Posterior vena cava (tissue), 2 donors: ENCODE measurements at regions of chr7 and their contacts with region 1.

Region 1: DNA sequence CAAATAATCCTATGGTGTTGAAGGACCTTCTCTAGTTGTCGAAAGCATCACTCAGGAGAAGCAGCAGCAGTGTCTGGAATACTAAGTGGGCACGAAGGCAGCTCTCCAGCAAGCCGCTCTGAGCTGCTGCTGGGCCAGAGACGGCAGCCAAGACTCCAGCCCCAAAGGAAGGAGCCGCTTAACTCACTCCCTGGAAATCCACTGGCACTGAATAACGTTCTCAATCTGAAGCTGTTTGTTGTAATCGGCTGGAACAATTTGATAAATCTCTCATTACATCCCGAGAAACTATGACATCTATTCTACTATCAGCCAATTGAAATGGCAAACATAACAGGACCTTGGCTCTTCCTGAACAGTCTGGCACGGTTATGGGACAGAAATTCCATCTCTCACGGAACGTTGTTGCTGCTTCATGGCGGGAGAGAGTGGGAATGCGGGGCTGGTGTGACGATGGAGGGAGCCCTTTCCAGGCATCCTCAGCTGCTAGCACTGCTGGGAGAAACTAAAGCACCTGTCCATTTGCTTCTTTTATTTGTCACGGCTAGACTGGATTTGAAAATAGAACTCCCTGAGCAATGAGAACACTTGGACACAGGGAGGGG is 331.5 kb upstream of the RNF32 start:
- DNase-seq: no peak

Region 2: DNA sequence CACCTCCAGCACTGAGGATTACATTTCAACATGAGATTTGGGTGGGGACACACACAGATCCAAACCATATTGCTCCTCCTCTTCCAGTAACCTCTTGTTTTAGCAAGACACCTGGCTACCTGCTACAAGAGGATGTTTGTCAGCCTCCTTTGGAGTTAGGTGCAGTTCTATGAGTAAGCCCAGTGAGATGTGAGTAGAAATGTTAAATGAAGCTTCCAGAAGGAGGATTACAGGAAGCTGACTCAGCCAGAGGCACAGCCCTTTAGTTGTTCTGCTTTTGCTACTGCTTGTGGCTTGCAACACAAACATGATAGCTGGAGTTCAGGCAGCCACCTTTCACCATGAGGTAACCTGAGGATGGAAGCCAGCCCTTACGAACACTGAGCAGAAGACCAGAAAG is 51.2 kb before region 1 on chr7:
- intact Hi-C with region 1: loop called in 1 of 2 experiments (anchors 2 kb)
- DNase-seq: no peak

Region 3: DNA sequence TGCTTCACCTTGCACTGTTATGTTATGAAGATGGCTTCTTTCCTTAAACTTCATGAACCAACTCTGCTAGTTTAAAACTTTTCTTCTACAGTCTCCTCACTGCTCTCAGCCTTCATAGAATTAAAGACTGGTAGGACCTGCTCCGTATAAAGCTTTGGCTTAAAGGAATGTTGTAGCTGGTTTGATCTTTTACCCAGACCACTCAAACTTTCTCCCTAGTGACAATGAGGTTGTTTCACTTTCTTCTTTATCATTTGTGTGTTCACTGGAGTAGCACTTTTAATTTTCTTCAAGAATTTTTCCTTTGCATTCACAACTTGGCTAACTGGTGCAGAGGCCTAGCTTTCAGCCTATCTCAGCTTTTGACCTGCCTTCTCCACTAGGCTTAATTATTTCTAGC is 15.1 kb after region 1 on chr7:
- intact Hi-C with region 1: no loop called
- DNase-seq: no peak

Region 4: GRCh38 chr7:157897681-157898080 is 1588.6 kb after region 1 on chr7:
- intact Hi-C with region 1: loop called in 1 of 2 experiments (anchors 5 kb)
- DNase-seq: no peak

Region 5: DNA sequence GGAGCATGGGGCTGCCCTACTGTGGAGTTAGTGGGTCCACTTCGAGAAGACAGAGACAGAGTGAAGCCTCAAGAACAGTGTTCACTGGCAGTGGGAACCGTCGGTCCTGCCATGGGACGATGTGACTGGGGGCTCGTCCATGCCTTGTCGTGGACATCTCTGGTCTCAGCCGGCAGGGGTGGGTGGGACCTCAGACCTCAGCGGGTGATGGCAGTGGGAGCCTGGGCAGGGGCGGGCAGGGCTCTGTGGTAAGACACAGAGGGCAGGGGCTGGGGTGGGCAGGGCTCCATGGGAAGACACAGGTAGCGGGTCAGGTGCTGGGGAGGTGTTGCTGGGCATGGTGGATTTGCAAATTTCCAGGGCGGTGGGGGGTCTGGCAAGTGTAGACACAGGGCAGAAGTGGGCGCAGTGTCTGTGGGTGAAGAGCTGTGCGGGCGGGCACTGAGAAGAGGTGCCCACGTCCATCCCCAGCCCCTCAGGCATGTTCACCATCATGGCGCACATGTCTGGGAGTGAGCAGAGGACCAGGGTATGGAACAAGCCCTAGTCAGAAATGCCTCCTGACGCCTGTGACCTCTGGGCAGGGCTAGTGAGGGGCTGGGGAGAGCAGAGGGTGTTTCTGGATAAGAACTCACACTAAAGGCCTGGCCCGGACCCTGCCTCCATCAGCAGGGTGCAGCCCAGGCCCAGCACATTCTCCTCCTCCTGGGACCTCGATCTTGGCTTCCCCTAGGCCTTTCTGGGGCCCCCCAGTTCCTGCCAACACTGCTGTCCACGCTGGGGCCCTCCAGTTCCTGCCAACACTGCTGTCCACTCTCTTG is 1665.5 kb after region 1 on chr7:
- intact Hi-C with region 1: loop called in 1 of 2 experiments (anchors 5 kb)
- DNase-seq: peak; percentile 69